Endothelial cell of umbilical vein (primary cell): ENCODE measurements at regions of chr10 and their contacts with region 1.

Region 1: DNA sequence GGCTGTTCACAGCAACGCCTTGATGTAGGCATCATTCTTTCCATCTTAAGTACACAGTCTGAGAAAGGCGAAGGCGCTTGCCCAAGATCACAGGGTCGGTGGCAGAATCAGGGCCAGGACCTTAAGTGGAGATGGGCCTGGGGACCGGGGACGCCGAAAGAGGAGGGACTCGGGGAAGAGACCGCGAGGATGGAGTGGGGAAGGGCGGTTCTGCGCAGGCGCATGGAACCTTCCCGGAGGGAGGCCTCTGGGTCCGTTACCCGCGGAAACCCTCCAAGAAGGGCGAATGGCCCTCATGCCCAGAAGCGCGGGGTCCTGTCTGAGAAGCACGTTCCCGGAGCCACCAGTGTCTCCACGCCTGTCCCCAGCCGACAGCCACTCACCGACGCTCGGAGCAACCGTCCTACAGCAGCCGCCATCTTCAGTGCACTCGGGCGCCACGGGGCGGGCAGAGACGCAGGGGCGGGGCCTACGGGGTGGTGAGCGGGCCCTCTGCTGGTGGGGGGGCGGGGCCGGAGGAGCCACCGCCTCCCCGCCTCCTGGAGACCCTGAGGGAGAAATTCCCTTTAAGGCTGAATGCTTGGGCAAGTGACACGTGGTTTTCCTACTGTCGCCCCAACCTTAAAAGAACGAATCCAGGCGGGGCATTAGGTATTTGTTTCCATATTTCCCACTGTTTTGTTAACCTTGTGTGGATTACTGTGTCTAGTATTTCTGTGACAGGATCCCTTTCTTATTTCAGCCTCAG is at the start of gene PRDX3:
- DNase-seq: peak; percentile 94
- H3K4me3 ChIP-seq: peak within 1 kb of the TSS; percentile 85 to 91 (median 87)
- H3K27ac ChIP-seq: peak within 1 kb of the TSS; percentile 83
- H3K4me1 ChIP-seq: peaks cover 12% of the 10 kb centered on the region
- H3K27me3 ChIP-seq: no peaks in the 10 kb centered on the region
- CTCF ChIP-seq: peak in 1 of 2 donors; percentile 22
- POLR2A ChIP-seq: peak; percentile 99
- total RNA-seq, gene PRDX3: 117 and 124 TPM in 2 replicates

Region 2: GRCh38 chr10:119165171-119166110 is 13.1 kb before region 1 on chr10 and contains the start of gene SFXN4:
- CTCF ChIA-PET with region 1: interaction called, 3 read pairs
- POLR2A ChIA-PET with region 1: no interaction called
- dilution Hi-C with region 1: no loop called
- intact Hi-C with region 1: loop called (anchors 1 kb)
- DNase-seq: peak; percentile 68
- H3K4me3 ChIP-seq: peak within 1 kb of the TSS; percentile 48 to 70 (median 62)
- H3K27ac ChIP-seq: peak within 1 kb of the TSS; percentile 54
- H3K4me1 ChIP-seq: peaks cover 24% of the 10 kb centered on the region
- H3K27me3 ChIP-seq: no peaks in the 10 kb centered on the region
- CTCF ChIP-seq: no peak
- POLR2A ChIP-seq: peak; percentile 81
- total RNA-seq, gene SFXN4: 14.5 and 17.1 TPM in 2 replicates

Region 3: DNA sequence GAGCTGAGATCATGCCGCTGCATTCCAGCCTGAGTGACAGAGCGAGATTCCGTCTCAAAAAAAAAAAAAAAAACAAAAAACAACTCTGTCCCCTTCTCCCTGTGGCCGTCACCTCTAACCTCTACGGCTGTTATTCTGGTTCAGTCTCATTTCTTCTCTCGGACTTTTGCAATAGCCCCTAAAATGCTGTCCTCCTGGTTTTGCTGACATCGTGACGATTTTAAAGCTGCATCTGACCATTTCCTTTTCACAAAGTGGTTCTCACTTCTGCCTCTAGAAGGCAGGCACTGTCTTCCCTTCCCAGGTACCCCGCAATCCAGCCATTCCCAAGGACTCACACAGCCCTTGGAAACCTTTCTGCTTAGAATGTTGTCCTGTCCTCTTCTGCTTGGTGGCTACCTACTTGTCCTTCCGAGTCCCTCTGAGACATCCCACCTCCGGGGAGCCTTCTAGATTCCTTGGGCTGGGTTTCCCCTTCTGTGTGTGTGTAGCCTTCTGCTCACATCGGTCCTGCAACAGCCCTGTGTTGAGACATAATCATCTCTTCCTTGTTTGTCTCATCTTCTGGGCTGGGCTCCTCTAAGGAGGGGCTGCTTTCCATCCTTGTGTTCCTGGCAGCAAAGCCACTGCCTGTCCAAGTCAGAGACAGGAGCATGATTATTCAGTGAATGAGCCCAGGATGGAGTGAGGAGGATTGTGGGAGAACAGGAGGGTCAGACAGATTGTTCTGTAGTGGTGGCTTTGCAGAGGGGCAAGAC is 111.9 kb after region 1 on chr10:
- CTCF ChIA-PET with region 1: no interaction called
- POLR2A ChIA-PET with region 1: no interaction called
- dilution Hi-C with region 1: no loop called
- intact Hi-C with region 1: no loop called
- DNase-seq: no peak
- H3K4me3 ChIP-seq: no peak overlapping the region
- H3K27ac ChIP-seq: no peak overlapping the region
- H3K4me1 ChIP-seq: peaks cover 2% of the 10 kb centered on the region
- H3K27me3 ChIP-seq: no peaks in the 10 kb centered on the region
- CTCF ChIP-seq: no peak
- POLR2A ChIP-seq: no peak